ENCODE measurements at regions of chr2 and their contacts with region 1.

Region 1: GRCh38 chr2:231925303-231926179 is 655 bp downstream of the NPPC start:
- DNase-seq: peak in 8 of 9 donors; percentile 41 to 80 (median 70)
- ATAC-seq: peak; percentile 82
- H3K4me3 ChIP-seq: peak overlapping the region; percentile 30
- H3K4me3 Mint-ChIP-seq: peak overlapping the region in 7 of 10 donors; percentile 39 to 82 (median 76)
- H3K27ac ChIP-seq: no peak overlapping the region
- H3K27ac Mint-ChIP-seq: no peak overlapping the region
- H3K4me1 ChIP-seq: peaks cover 4 to 16% of the 10 kb centered on the region in 2 donors
- H3K4me1 Mint-ChIP-seq: peaks cover 0 to 20% (median 6%) of the 10 kb centered on the region in 7 donors
- H3K27me3 ChIP-seq: peaks cover 0 to 9% of the 10 kb centered on the region in 2 donors
- H3K27me3 Mint-ChIP-seq: peaks cover 39 to 55% (median 40%) of the 10 kb centered on the region in 5 donors

Region 2: GRCh38 chr2:232142049-232142448 is 216.5 kb after region 1 on chr2:
- CTCF ChIA-PET with region 1: interaction called, 5 read pairs
- POLR2A ChIA-PET with region 1: no interaction called
- intact Hi-C with region 1: loop called in 1 of 2 experiments (anchors 1 kb)
- DNase-seq: peak in 4 of 9 donors; percentile 22 to 41 (median 30)
- ATAC-seq: no peak
- H3K4me3 ChIP-seq: no peak overlapping the region
- H3K4me3 Mint-ChIP-seq: no peak overlapping the region
- H3K27ac ChIP-seq: no peak overlapping the region
- H3K27ac Mint-ChIP-seq: peak overlapping the region in 1 of 9 donors; percentile 72
- H3K4me1 ChIP-seq: peaks cover 0 to 29% of the 10 kb centered on the region in 2 donors
- H3K4me1 Mint-ChIP-seq: peaks cover 15 to 47% (median 41%) of the 10 kb centered on the region in 7 donors
- H3K27me3 ChIP-seq: no peaks in the 10 kb centered on the region
- H3K27me3 Mint-ChIP-seq: no peaks in the 10 kb centered on the region

Region 3: DNA sequence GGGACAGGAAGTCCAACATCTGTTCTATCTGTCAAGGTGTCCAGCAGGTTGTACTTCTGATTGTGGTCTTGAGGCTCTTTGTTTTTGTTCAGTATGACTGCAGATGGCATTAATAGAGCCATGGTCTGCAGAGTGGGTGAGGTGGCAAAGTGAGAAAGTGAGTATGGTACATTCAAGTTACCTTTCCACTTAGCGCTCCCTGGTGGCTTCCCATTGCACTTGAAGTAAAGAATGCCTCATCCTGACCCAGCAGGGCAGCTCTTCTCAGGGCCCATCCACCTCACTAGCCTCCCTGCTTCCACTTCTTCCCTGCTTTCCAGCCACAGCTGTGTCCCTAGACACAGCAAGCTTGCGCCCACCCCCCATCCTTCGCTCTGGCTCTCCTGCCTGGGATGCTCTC is 305.0 kb after region 1 on chr2:
- CTCF ChIA-PET with region 1: no interaction called
- POLR2A ChIA-PET with region 1: no interaction called
- intact Hi-C with region 1: loop called in 1 of 2 experiments (anchors 1 kb)
- DNase-seq: no peak
- ATAC-seq: no peak
- H3K4me3 ChIP-seq: no peak overlapping the region
- H3K4me3 Mint-ChIP-seq: no peak overlapping the region
- H3K27ac ChIP-seq: no peak overlapping the region
- H3K27ac Mint-ChIP-seq: peak overlapping the region in 1 of 9 donors; percentile 39
- H3K4me1 ChIP-seq: no peaks in the 10 kb centered on the region
- H3K4me1 Mint-ChIP-seq: peaks cover 12 to 39% (median 24%) of the 10 kb centered on the region in 7 donors
- H3K27me3 ChIP-seq: no peaks in the 10 kb centered on the region
- H3K27me3 Mint-ChIP-seq: no peaks in the 10 kb centered on the region

Region 4: GRCh38 chr2:232327105-232328041 is 401.8 kb after region 1 on chr2:
- CTCF ChIA-PET with region 1: interaction called, 3 read pairs
- POLR2A ChIA-PET with region 1: no interaction called
- intact Hi-C with region 1: loop called (anchors 1 kb)
- DNase-seq: peak; percentile 72 to 94 (median 80)
- ATAC-seq: peak; percentile 91
- H3K4me3 ChIP-seq: no peak overlapping the region
- H3K4me3 Mint-ChIP-seq: no peak overlapping the region
- H3K27ac ChIP-seq: no peak overlapping the region
- H3K27ac Mint-ChIP-seq: peak overlapping the region in 1 of 9 donors; percentile 32
- H3K4me1 ChIP-seq: peaks cover 7 to 11% of the 10 kb centered on the region in 2 donors
- H3K4me1 Mint-ChIP-seq: peaks cover 8 to 25% (median 13%) of the 10 kb centered on the region in 7 donors
- H3K27me3 ChIP-seq: no peaks in the 10 kb centered on the region
- H3K27me3 Mint-ChIP-seq: no peaks in the 10 kb centered on the region

Region 5: DNA sequence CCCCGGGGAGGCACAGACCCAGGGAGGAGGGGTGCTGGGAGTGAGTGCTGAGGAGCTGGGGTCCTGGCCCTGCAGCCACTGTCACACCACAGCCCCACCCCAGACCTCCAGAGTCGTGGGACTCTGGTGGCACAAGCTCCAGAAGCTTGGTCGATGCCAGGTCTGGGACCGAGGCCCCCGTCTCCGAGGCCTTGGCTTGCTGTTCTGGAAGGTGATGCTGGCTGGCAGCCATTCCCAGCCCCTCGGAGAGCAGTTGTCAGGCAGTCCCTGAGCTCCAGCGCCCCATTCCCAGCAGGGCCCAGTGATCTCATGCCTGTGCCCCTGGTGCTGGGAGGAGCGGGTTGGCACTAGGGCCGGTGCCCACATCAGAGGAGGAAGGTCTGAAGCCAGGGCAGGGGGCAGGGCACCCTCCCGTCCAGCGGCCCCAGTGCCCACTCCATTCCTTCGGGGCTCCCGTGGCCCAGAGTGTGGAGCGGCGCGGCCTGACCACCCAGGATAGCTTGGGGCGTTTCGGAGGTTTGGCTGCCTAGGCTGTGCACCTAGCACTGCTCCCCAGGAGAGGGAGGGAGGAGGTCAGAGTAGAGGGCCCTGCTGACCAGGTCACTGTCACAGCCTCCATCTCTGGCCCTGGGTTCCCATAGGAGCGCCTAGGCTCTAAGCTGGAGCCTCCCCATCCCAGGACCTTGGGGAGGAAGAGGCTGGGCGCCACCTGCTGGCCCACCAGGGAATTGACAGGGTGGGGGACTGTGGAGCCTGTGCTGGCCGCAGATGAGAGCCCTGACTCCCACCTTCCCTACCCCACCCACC is 513.6 kb after region 1 on chr2:
- CTCF ChIA-PET with region 1: no interaction called
- POLR2A ChIA-PET with region 1: no interaction called
- intact Hi-C with region 1: loop called (anchors 1 to 5 kb)
- DNase-seq: peak in 5 of 9 donors; percentile 20 to 54 (median 28)
- ATAC-seq: peak; percentile 52
- H3K4me3 ChIP-seq: no peak overlapping the region
- H3K4me3 Mint-ChIP-seq: no peak overlapping the region
- H3K27ac ChIP-seq: no peak overlapping the region
- H3K27ac Mint-ChIP-seq: no peak overlapping the region
- H3K4me1 ChIP-seq: no peaks in the 10 kb centered on the region
- H3K4me1 Mint-ChIP-seq: peaks cover 0 to 8% (median 3%) of the 10 kb centered on the region in 7 donors
- H3K27me3 ChIP-seq: no peaks in the 10 kb centered on the region
- H3K27me3 Mint-ChIP-seq: peaks cover 0 to 5% (median 0%) of the 10 kb centered on the region in 5 donors

Region 6: DNA sequence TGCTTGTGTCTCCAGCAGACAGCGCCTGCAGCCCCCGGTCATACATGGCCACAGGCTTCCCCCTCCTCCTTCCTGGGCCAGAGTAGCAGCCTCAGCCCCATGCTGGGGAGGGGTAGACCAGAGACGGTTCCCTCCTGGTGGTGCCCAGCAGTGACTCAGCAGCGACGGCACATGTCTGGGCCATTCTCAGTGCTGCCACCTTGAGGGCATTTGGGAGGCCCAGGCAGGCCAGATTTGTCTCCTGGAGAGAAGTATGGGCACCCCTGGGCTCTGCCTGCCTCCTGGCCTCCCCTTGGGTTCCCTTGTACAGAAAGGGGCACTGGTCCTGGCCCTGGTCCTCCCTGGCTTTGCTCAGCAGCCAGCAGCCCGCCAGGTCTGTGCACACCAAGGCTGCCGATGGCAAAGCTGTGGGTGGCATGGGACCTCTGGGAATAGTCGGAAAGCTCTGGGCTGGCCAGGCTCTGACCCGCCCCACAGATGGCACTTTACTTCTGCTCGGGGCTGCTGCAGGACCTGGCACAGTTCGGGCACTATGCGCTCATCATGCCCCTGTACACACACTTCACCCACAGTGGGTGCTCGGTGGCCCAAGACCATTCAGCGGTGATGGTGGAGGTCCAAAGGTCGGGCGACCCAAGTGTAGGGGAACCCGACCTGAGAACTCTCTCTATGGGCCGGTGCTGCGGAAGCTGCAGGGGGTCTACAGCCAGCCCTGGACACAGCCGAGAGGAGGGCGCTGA is 519.0 kb after region 1 on chr2:
- CTCF ChIA-PET with region 1: no interaction called
- POLR2A ChIA-PET with region 1: no interaction called
- intact Hi-C with region 1: loop called (anchors 1 to 5 kb)
- DNase-seq: peak in 8 of 9 donors; percentile 17 to 68 (median 35)
- ATAC-seq: peak; percentile 47
- H3K4me3 ChIP-seq: no peak overlapping the region
- H3K4me3 Mint-ChIP-seq: no peak overlapping the region
- H3K27ac ChIP-seq: no peak overlapping the region
- H3K27ac Mint-ChIP-seq: no peak overlapping the region
- H3K4me1 ChIP-seq: no peaks in the 10 kb centered on the region
- H3K4me1 Mint-ChIP-seq: peaks cover 0 to 12% (median 3%) of the 10 kb centered on the region in 7 donors
- H3K27me3 ChIP-seq: no peaks in the 10 kb centered on the region
- H3K27me3 Mint-ChIP-seq: peaks cover 0 to 3% (median 0%) of the 10 kb centered on the region in 5 donors

Region 7: DNA sequence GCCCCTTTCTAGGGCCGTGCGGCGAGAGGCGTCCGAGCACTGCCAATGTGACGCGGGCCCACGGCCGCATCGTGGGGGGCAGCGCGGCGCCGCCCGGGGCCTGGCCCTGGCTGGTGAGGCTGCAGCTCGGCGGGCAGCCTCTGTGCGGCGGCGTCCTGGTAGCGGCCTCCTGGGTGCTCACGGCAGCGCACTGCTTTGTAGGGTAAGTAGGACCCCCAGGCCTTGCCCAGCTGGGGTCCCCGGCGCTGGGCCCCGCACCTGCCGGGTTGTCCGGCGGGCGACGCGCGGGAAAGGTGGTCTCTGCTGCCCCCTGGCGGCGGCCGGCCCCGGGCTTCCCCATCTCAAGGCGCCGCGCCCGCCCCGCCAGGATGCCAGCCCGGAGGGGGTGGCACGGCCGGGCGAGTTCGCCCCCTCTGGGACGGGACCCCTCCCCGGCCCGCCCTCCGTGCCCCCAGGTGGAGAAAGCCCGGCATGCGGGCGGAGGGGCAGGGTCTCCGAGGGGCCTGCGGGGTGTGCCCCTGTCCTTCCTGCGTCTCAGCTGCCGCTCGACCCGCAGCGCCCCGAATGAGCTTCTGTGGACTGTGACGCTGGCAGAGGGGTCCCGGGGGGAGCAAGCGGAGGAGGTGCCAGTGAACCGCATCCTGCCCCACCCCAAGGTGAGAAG is 596.5 kb after region 1 on chr2:
- CTCF ChIA-PET with region 1: no interaction called
- POLR2A ChIA-PET with region 1: no interaction called
- intact Hi-C with region 1: loop called in 1 of 2 experiments (anchors 10 kb)
- DNase-seq: peak; percentile 31 to 82 (median 64)
- ATAC-seq: peak; percentile 80
- H3K4me3 ChIP-seq: peak overlapping the region; percentile 20
- H3K4me3 Mint-ChIP-seq: peak overlapping the region in 5 of 10 donors; percentile 45 to 80 (median 66)
- H3K27ac ChIP-seq: no peak overlapping the region
- H3K27ac Mint-ChIP-seq: no peak overlapping the region
- H3K4me1 ChIP-seq: peaks cover 0 to 7% of the 10 kb centered on the region in 2 donors
- H3K4me1 Mint-ChIP-seq: peaks cover 2 to 17% (median 11%) of the 10 kb centered on the region in 7 donors
- H3K27me3 ChIP-seq: peaks cover 0 to 9% of the 10 kb centered on the region in 2 donors
- H3K27me3 Mint-ChIP-seq: peaks cover 18 to 40% (median 31%) of the 10 kb centered on the region in 5 donors

Measured in naive thymus-derived CD4-positive, alpha-beta T cell (primary cell).